Caco-2 (cell line): ENCODE measurements at regions of chr12 and their contacts with region 1.

Region 1: GRCh38 chr12:62793256-62794217 is 141.4 kb downstream of the PPM1H start:
- DNase-seq: peak; percentile 64 to 82
- H3K4me3 ChIP-seq: no peak overlapping the region
- H3K4me3 Mint-ChIP-seq: no peak overlapping the region
- H3K27ac Mint-ChIP-seq: no peak overlapping the region
- H3K4me1 ChIP-seq: peaks cover 32% of the 10 kb centered on the region
- H3K4me1 Mint-ChIP-seq: peaks cover 9% of the 10 kb centered on the region
- H3K27me3 ChIP-seq: no peaks in the 10 kb centered on the region
- H3K27me3 Mint-ChIP-seq: no peaks in the 10 kb centered on the region
- CTCF ChIP-seq: peak; percentile 80 to 91

Region 2: GRCh38 chr12:62426089-62426488 is 367.4 kb before region 1 on chr12:
- CTCF ChIA-PET with region 1: no interaction called
- POLR2A ChIA-PET with region 1: no interaction called
- intact Hi-C with region 1: no loop called
- DNase-seq: peak in 1 of 2 experiments; percentile 15
- H3K4me3 ChIP-seq: no peak overlapping the region
- H3K4me3 Mint-ChIP-seq: no peak overlapping the region
- H3K27ac Mint-ChIP-seq: no peak overlapping the region
- H3K4me1 ChIP-seq: no peaks in the 10 kb centered on the region
- H3K4me1 Mint-ChIP-seq: no peaks in the 10 kb centered on the region
- H3K27me3 ChIP-seq: no peaks in the 10 kb centered on the region
- H3K27me3 Mint-ChIP-seq: peaks cover 9% of the 10 kb centered on the region
- CTCF ChIP-seq: no peak

Region 3: GRCh38 chr12:62724947-62725447 is 68.5 kb before region 1 on chr12:
- CTCF ChIA-PET with region 1: no interaction called
- POLR2A ChIA-PET with region 1: no interaction called
- intact Hi-C with region 1: loop called (anchors 2 kb)
- DNase-seq: peak; percentile 80 to 81
- H3K4me3 ChIP-seq: no peak overlapping the region
- H3K4me3 Mint-ChIP-seq: peak overlapping the region; percentile 54
- H3K27ac Mint-ChIP-seq: peak overlapping the region; percentile 80
- H3K4me1 ChIP-seq: peaks cover 69% of the 10 kb centered on the region
- H3K4me1 Mint-ChIP-seq: peaks cover 60% of the 10 kb centered on the region
- H3K27me3 ChIP-seq: no peaks in the 10 kb centered on the region
- H3K27me3 Mint-ChIP-seq: no peaks in the 10 kb centered on the region
- CTCF ChIP-seq: no peak

Region 4: DNA sequence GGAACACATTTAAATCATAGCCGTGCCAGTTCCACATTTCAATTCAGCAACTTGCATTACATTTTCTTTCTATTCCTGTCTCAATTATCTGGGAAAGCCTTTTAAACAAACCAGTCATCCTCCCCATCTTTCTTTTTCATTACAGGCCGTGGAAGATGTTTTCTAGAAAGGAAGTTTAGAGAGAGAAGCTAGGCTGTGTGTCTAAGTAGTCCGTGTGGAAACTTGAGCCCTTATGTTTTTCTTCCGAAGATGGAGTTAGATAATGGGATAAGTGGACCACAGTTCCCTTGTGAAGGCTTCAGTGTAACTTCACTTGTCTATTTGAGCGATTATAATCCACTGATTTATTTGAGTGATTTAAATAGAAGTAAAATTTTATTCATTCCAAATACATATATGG is 153.8 kb after region 1 on chr12:
- CTCF ChIA-PET with region 1: no interaction called
- POLR2A ChIA-PET with region 1: no interaction called
- intact Hi-C with region 1: no loop called
- DNase-seq: no peak
- H3K4me3 ChIP-seq: no peak overlapping the region
- H3K4me3 Mint-ChIP-seq: no peak overlapping the region
- H3K27ac Mint-ChIP-seq: no peak overlapping the region
- H3K4me1 ChIP-seq: 0 out of 2 replicates have a peak, but pooled peaks cover 9% of the 10 kb centered on the region
- H3K4me1 Mint-ChIP-seq: peaks cover 26% of the 10 kb centered on the region
- H3K27me3 ChIP-seq: no peaks in the 10 kb centered on the region
- H3K27me3 Mint-ChIP-seq: no peaks in the 10 kb centered on the region
- CTCF ChIP-seq: no peak